Posterior cingulate gyrus (tissue), 11 donors: ENCODE measurements at regions of chr14 and their contacts with region 1.

Region 1: GRCh38 chr14:37150414-37150813 is 22.0 kb downstream of the SLC25A21 start:
- DNase-seq: no peak

Region 2: GRCh38 chr14:37023875-37024565 is 126.4 kb before region 1 on chr14:
- intact Hi-C with region 1: loop called (anchors 2 kb)
- DNase-seq: no peak